Activated CD4-positive, alpha-beta memory T cell treated with anti-CD3 and anti-CD28 coated beads for 36 hours (primary cell): ENCODE measurements at regions of chr12 and their contacts with region 1.

Region 1: GRCh38 chr12:89306827-89307473 is 45.4 kb downstream of the DUSP6 start:
- DNase-seq: no peak
- H3K4me3 Mint-ChIP-seq: no peak overlapping the region
- H3K27ac Mint-ChIP-seq: no peak overlapping the region
- H3K4me1 Mint-ChIP-seq: peaks cover 38% of the 10 kb centered on the region
- H3K27me3 Mint-ChIP-seq: no peaks in the 10 kb centered on the region

Region 2: DNA sequence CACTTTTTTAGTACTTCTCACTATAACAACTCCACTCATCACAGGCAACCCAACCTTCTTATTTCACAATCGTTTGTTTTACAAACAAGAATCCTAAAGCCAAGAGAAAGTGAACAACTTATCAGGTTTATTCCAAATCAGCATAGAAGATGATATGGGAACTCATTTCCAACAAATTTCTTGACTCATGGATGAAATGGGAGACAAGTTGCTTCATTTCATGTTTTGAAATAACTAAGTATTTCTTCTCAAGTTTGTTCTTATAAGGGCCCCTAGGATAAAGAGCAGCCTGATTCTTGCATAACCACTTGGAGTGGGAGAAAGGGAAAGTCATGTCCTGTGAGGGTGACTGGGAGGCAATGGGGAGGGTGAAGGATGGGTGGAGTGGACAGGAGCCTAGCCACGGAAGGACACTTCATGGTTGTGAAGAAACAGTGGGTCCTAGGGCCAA is 122.9 kb before region 1 on chr12:
- CTCF ChIA-PET with region 1: no interaction called
- POLR2A ChIA-PET with region 1: no interaction called
- intact Hi-C with region 1: no loop called
- DNase-seq: no peak
- H3K4me3 Mint-ChIP-seq: no peak overlapping the region
- H3K27ac Mint-ChIP-seq: no peak overlapping the region
- H3K4me1 Mint-ChIP-seq: peaks cover 30% of the 10 kb centered on the region
- H3K27me3 Mint-ChIP-seq: no peaks in the 10 kb centered on the region

Region 3: GRCh38 chr12:89236748-89237388 is 70.1 kb before region 1 on chr12:
- CTCF ChIA-PET with region 1: no interaction called
- POLR2A ChIA-PET with region 1: no interaction called
- intact Hi-C with region 1: no loop called
- DNase-seq: no peak
- H3K4me3 Mint-ChIP-seq: no peak overlapping the region
- H3K27ac Mint-ChIP-seq: no peak overlapping the region
- H3K4me1 Mint-ChIP-seq: peaks cover 63% of the 10 kb centered on the region
- H3K27me3 Mint-ChIP-seq: no peaks in the 10 kb centered on the region

Region 4: DNA sequence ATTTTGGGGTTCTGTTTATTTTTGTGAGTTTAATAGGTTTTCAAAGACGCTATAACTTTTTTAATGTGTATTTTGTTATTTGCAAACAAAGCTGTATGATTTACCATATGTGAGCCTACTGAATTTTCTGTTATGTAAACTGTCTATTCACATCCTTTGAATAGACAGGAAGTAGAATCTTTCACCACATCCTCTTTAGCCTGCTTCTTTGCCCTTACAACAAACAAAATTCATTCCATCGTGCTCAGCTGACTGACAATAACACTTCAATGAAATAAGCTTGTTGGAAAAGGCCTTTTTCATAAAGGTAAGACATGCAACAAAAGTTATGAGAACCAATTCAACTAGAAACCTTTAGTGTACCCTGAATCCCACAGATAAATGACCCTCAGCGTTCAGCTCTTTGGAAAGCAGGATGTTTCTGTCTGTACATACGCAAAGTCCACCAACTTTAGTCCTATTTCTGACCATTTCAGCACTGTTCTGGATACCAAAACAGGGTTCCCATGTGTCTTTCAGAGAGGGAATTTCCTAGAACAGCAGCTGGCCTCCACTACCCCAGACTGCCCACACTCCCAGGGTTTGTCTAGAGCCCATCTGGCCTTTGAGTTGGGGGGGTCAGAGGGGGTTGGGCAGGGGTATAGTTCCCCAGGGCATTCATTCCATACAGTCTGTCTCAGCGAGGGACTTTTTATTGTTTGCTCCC is 26.0 kb before region 1 on chr12:
- CTCF ChIA-PET with region 1: no interaction called
- POLR2A ChIA-PET with region 1: no interaction called
- intact Hi-C with region 1: loop called (anchors 2 kb)
- DNase-seq: no peak
- H3K4me3 Mint-ChIP-seq: peak overlapping the region; percentile 30
- H3K27ac Mint-ChIP-seq: peak overlapping the region; percentile 75
- H3K4me1 Mint-ChIP-seq: peaks cover 23% of the 10 kb centered on the region
- H3K27me3 Mint-ChIP-seq: no peaks in the 10 kb centered on the region

Region 5: DNA sequence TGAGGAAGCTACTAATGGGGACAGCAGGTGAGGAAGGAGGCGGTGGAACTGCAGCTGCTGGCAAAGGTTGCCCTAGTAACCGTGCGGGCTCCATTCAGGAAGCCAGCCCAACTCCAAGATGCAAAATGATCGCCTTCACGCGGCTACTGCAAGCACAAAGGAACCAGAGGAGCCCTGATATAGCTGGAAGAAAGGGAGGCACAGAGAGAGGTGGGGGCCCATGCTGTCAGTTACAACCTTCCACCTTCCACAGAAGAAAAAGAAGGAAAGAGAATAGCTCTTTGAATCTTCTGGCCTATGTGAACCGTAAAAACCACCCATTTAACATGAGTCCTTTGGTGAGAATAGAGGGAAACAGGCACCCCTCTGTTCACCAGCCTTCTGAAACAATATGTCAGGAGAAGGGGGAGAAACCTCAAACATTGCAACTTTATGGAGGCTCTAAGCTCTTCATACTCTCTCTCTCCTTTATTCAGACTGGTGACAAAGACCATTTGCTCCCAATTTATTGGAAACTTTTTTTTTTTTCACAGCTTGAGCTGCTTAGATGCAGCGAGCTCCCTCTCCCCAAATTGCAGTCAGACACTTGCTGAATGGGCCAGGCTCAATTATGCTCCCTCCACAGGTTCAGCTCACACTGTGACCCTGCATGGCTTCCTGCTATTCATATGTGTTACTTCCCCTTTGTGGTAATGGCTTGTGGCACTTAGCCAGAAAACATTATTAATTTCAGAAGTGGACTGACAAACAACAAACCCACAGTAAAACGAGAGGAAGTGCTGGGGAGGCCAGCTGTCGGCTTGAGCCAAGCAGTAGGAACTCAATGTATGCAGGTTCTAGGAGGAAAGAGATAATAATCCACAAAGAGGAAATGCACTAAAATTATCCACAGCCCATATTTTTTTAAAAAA is 39.1 kb after region 1 on chr12:
- CTCF ChIA-PET with region 1: no interaction called
- POLR2A ChIA-PET with region 1: no interaction called
- intact Hi-C with region 1: no loop called
- DNase-seq: peak; percentile 65
- H3K4me3 Mint-ChIP-seq: peak overlapping the region; percentile 57
- H3K27ac Mint-ChIP-seq: peak overlapping the region; percentile 76
- H3K4me1 Mint-ChIP-seq: peaks cover 56% of the 10 kb centered on the region
- H3K27me3 Mint-ChIP-seq: peaks cover 2% of the 10 kb centered on the region

Region 6: GRCh38 chr12:90268574-90268973 is 961.6 kb after region 1 on chr12:
- CTCF ChIA-PET with region 1: no interaction called
- POLR2A ChIA-PET with region 1: no interaction called
- intact Hi-C with region 1: no loop called
- DNase-seq: no peak
- H3K4me3 Mint-ChIP-seq: no peak overlapping the region
- H3K27ac Mint-ChIP-seq: no peak overlapping the region
- H3K4me1 Mint-ChIP-seq: no peaks in the 10 kb centered on the region
- H3K27me3 Mint-ChIP-seq: no peaks in the 10 kb centered on the region